ENCODE measurements at regions of chr10 and their contacts with region 1.

Region 1: DNA sequence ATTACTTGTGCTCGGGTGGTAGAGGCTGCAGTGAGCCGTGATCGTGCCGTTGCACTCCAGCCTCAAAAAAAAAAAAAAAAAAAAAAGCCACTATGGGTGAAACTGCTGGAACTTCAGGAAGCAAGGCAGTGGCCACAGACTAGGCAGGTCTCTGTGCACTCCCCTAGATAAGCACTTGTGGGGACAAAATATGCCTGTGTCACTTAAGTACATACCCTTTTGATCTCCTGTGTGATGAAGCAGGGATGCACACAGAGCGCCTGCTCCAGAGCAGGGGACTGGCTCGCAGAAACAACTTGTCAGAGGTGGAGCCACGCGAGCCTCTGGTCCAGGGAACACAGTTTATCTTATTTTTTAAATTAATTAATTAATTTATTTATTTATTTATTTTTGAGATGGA is 42.9 kb upstream of the PSAP start:
- H3K4me3 Mint-ChIP-seq: no peak overlapping the region
- H3K27ac Mint-ChIP-seq: peak overlapping the region; percentile 41
- H3K4me1 Mint-ChIP-seq: peaks cover 74% of the 10 kb centered on the region
- H3K27me3 Mint-ChIP-seq: no peaks in the 10 kb centered on the region

Region 2: DNA sequence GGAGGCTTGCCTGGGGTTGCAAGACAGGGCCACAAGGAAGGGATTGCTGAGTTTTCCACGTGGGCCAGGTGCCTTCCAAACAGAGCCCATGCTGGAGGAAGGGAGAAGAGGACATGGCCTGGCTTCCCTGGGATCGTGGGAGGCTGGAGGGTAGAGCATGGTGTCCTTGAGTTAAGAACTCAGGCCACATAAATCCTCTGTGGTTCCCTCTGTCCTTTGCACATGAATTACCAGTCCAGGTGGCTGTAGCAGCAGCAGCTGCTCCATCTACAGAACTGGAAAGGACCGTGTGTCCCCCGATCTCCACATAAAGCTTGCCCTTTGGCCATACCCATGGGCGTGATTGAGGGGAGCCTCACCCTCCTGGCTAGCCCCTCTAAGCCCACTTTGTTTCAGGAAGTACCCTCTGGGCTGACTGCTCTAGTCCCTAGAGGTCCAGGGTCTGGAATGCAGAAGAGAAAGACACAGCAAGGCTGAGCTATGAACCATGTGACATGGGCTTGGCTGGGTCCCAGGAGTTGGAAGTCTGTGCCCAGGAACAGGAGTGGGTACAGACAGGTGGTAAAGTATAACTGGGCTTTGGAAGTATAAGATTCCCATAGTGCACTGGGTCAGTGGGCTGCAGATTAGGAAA is 259.3 kb before region 1 on chr10:
- intact Hi-C with region 1: no loop called
- H3K4me3 Mint-ChIP-seq: no peak overlapping the region
- H3K27ac Mint-ChIP-seq: peak overlapping the region; percentile 3
- H3K4me1 Mint-ChIP-seq: peaks cover 57% of the 10 kb centered on the region
- H3K27me3 Mint-ChIP-seq: peaks cover 5% of the 10 kb centered on the region

Region 3: DNA sequence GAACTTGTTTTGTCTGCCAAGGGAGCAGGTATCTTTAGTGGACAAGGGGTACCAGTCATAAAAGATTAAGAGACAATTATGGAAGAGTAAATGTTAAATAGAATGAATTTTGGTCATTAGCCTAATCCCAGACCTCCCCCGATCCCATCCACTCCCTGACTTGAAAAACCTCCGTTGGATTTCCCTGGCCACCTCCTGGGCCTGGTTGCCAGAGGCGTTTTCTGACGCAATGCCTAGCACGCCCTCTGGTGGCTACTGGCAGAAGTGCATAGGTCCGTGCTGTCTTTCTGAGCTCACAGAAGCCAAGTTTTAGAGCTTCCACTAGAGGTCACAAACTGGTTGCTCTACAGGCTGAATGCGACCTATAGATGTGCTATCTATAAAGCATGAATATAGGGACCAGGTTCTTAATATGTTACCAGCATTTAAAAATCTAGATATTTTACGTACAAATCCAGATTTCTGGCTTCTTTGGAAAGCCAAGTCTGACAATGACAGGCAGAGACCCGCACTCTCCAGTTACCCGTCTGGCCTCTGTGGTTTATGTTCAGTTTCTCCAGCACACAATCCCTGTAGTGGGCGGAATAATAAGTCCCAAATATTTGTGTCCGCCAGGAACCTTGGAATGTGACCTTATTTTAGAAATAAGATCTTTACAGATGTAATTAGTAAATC is 154.7 kb after region 1 on chr10:
- intact Hi-C with region 1: loop called (anchors 1 kb)
- H3K4me3 Mint-ChIP-seq: no peak overlapping the region
- H3K27ac Mint-ChIP-seq: no peak overlapping the region
- H3K4me1 Mint-ChIP-seq: no peaks in the 10 kb centered on the region
- H3K27me3 Mint-ChIP-seq: peaks cover 1% of the 10 kb centered on the region

Region 4: DNA sequence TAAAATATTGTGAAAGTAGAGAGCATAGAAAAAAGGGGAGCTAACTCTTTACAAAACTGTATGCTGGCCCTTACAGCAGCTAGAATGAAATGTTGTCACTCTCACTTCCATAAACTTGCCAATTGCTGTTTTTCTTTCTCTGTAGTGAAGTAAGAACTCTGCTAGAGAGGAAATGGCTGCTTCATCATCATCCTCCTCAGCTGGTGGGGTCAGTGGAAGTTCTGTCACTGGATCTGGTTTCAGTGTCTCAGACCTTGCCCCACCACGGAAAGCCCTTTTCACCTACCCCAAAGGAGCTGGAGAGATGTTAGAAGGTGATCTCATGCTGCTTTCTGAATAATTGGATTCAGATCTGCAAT is 329.8 kb after region 1 on chr10:
- intact Hi-C with region 1: loop called (anchors 2 kb)
- H3K4me3 Mint-ChIP-seq: no peak overlapping the region
- H3K27ac Mint-ChIP-seq: no peak overlapping the region
- H3K4me1 Mint-ChIP-seq: peaks cover 38% of the 10 kb centered on the region
- H3K27me3 Mint-ChIP-seq: no peaks in the 10 kb centered on the region